ENCODE measurements at regions of chr6 and their contacts with region 1.

Region 1: GRCh38 chr6:159739341-159739740 is 12.0 kb downstream of the WTAP start:
- DNase-seq: no peak
- H3K4me3 Mint-ChIP-seq: no peak overlapping the region
- H3K27ac Mint-ChIP-seq: no peak overlapping the region
- H3K4me1 Mint-ChIP-seq: peaks cover 38% of the 10 kb centered on the region
- H3K27me3 Mint-ChIP-seq: no peaks in the 10 kb centered on the region

Region 2: GRCh38 chr6:159505140-159505922 is 234.0 kb before region 1 on chr6:
- CTCF ChIA-PET with region 1: no interaction called
- intact Hi-C with region 1: no loop called
- DNase-seq: no peak
- H3K4me3 Mint-ChIP-seq: no peak overlapping the region
- H3K27ac Mint-ChIP-seq: no peak overlapping the region
- H3K4me1 Mint-ChIP-seq: no peaks in the 10 kb centered on the region
- H3K27me3 Mint-ChIP-seq: peaks cover 11% of the 10 kb centered on the region

Region 3: GRCh38 chr6:159761873-159762680 is 22.7 kb after region 1 on chr6 and contains the start of gene ACAT2:
- CTCF ChIA-PET with region 1: no interaction called
- intact Hi-C with region 1: loop called (anchors 2 kb)
- DNase-seq: peak; percentile 97
- H3K4me3 Mint-ChIP-seq: peak within 1 kb of the TSS; percentile 96
- H3K27ac Mint-ChIP-seq: peak within 1 kb of the TSS; percentile 96
- H3K4me1 Mint-ChIP-seq: peaks cover 42% of the 10 kb centered on the region
- H3K27me3 Mint-ChIP-seq: no peaks in the 10 kb centered on the region
- total RNA-seq, gene ACAT2: 84.9 to 92.4 TPM